GM12878 (cell line): ENCODE measurements at regions of chr1 and their contacts with region 1.

Region 1: GRCh38 chr1:206808615-206809014 is 36.3 kb upstream of the IL10 start:
- DNase-seq: no peak
- ATAC-seq: peak; percentile 99
- H3K4me3 ChIP-seq: no peak overlapping the region
- H3K27ac ChIP-seq: no peak overlapping the region
- H3K4me1 ChIP-seq: peaks cover 11% of the 10 kb centered on the region
- H3K27me3 ChIP-seq: no peaks in the 10 kb centered on the region
- CTCF ChIP-seq: peak; percentile 69 to 92 (median 70)
- EP300 ChIP-seq: no peak
- POLR2A ChIP-seq: no peak
- RAD21 ChIP-seq: peak; percentile 99

Region 2: DNA sequence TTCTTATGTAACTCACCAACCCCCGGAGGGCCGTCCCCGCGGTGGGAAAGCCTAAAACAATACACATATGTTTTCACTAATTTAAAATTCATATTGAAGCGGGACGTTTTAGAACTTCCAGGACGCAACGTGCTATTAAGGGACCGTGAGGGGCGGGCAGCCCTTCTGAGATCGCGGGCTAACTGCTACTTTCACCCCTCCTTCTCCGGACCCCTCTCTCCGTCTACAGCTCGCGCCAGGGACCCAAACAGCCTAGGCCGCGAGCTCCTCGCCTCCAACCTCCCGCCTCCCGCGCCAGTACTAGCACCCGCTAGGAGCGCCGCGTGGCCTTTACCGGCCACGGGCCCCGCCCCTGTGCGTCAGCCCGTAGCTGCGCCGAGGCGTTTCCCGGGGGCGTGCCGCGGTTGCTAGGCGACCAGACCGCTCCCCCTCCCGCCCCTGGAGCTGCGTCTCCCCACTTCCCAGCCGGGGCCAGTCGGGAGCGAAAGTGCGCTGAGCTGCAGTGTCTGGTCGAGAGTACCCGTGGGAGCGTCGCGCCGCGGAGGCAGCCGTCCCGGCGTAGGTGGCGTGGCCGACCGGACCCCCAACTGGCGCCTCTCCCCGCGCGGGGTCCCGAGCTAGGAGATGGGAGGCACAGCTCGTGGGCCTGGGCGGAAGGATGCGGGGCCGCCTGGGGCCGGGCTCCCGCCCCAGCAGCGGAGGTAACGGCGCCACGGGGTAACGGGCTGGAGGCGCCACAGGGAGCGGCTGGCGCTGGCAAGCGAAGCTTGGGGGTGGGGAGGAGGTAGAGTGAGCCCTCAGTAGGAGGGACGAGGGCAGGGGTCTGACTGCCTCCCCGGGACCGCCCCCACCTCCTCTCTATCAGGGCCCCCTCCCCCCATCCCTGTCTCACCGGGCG is 173.3 kb before region 1 on chr1 and contains the start of gene DYRK3:
- CTCF ChIA-PET with region 1: interaction called, 20 read pairs
- POLR2A ChIA-PET with region 1: interaction called, 6 read pairs
- RAD21 ChIA-PET with region 1: interaction called, 13 read pairs
- SMC1A ChIA-PET with region 1: interaction called, 26 read pairs
- in situ Hi-C with region 1: no loop called
- intact Hi-C with region 1: loop called (anchors 2 kb)
- DNase-seq: peak; percentile 71
- ATAC-seq: peak; percentile 92
- H3K4me3 ChIP-seq: peak within 1 kb of the TSS; percentile 94
- H3K27ac ChIP-seq: peak within 1 kb of the TSS; percentile 62
- H3K4me1 ChIP-seq: peaks cover 26% of the 10 kb centered on the region
- H3K27me3 ChIP-seq: no peaks in the 10 kb centered on the region
- CTCF ChIP-seq: 0 out of 6 replicates have a peak, but pooled peaks of 1 of the 3 experiments have one; percentile 5
- EP300 ChIP-seq: 0 out of 4 replicates have a peak, but pooled peaks of 1 of the 2 experiments have one; percentile 17
- POLR2A ChIP-seq: peak; percentile 94
- RAD21 ChIP-seq: no peak
- polyA plus RNA-seq, gene DYRK3: 1.6 to 2.8 TPM

Region 3: DNA sequence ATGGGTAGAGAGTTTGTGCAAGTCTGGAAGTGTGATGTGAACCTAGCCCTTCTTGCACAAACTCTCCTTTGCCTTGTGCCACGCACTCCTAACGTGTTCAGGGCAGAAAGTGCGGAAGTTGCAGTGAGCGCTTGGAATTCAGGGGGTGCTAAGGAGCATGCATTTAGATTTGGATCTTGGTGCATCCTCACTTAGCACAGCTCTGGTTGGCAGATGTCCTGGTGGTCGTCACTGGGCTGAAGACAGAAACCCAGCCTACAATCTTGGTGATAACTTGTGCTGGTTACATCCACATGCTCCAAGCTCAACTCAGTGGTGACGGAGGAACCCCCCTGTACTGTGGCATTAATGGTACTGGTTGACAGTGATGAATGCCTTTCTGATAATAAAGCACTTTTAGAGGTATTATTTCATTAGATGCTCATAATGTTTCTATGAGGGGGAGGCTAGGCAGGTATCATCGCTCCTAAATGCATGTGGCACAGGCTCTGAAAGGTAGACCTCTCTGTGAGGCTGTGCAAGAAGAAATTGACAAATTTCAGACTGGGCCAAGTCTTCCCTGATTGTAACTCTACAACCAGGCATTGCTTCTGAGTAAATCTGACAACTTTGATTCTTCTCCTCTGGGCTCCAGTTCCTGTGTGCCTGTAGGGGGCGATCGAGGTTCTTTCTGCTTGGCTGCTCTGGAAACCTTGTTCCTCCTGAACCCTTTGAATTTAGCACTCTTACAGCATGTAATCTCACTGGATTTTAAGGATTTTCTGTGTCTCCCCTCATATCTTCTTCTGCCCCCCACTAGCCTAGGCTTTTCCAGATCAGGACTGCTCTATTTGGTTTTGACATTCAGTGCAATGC is 83.3 kb before region 1 on chr1:
- CTCF ChIA-PET with region 1: interaction called, 805 read pairs
- POLR2A ChIA-PET with region 1: interaction called, 3 read pairs
- RAD21 ChIA-PET with region 1: interaction called, 297 read pairs
- SMC1A ChIA-PET with region 1: interaction called, 66 read pairs
- in situ Hi-C with region 1: no loop called
- intact Hi-C with region 1: loop called (anchors 1 kb)
- DNase-seq: no peak
- ATAC-seq: peak; percentile 84
- H3K4me3 ChIP-seq: no peak overlapping the region
- H3K27ac ChIP-seq: 0 out of 2 replicates have a peak overlapping the region, but pooled peaks have one; percentile 34
- H3K4me1 ChIP-seq: peaks cover 29% of the 10 kb centered on the region
- H3K27me3 ChIP-seq: no peaks in the 10 kb centered on the region
- CTCF ChIP-seq: peak; percentile 59 to 78 (median 73)
- EP300 ChIP-seq: no peak
- POLR2A ChIP-seq: no peak
- RAD21 ChIP-seq: peak; percentile 53

Region 4: DNA sequence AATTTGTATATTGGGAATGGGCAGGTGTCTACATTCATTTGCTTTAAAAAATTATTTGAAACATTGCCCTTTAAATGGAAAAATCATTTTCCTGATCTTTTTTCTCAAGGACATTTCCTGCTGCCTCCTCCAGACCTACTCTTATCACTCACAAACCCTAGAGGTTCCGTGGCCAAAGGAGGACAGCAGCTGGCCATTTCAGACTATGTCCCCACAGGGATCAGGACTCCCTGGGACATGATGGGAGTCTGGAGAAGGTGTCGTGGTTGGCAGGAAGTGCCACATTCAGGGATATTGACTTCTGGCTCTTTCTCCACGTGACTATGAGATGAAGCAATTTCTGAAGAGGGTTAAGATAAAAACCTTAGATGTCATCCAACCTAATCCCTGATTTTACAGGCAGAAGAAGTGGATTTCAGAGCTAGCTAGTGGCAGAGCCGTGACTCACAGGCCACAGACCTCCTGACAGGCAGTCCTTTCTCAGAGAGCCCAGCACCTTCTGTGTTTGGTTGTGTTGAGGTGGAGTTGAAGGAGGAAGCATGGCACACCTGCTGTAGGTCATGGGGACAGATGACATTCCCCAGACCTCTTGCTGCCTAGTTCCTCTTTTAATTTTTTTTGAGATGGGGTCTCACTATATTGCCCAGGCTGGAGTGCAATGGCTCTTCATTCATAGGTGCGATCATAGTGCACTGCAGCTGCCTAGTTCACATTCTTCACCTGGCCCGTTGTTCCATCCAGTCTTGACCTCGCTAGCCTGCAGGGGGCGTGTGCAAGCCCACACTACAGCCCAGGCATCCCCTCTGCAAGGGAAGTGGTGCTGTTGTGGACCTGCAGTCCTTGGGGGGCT is 10.9 kb before region 1 on chr1:
- CTCF ChIA-PET with region 1: interaction called, 30 read pairs
- POLR2A ChIA-PET with region 1: interaction called, 5 read pairs
- RAD21 ChIA-PET with region 1: interaction called, 12 read pairs
- SMC1A ChIA-PET with region 1: interaction called, 26 read pairs
- in situ Hi-C with region 1: no loop called
- intact Hi-C with region 1: no loop called
- DNase-seq: no peak
- ATAC-seq: peak; percentile 31; the same call in 2 of the 3 replicates
- H3K4me3 ChIP-seq: no peak overlapping the region
- H3K27ac ChIP-seq: no peak overlapping the region
- H3K4me1 ChIP-seq: peaks cover 28% of the 10 kb centered on the region
- H3K27me3 ChIP-seq: no peaks in the 10 kb centered on the region
- CTCF ChIP-seq: peak; percentile 44 to 78 (median 73)
- EP300 ChIP-seq: no peak
- POLR2A ChIP-seq: no peak
- RAD21 ChIP-seq: peak; percentile 41

Region 5: DNA sequence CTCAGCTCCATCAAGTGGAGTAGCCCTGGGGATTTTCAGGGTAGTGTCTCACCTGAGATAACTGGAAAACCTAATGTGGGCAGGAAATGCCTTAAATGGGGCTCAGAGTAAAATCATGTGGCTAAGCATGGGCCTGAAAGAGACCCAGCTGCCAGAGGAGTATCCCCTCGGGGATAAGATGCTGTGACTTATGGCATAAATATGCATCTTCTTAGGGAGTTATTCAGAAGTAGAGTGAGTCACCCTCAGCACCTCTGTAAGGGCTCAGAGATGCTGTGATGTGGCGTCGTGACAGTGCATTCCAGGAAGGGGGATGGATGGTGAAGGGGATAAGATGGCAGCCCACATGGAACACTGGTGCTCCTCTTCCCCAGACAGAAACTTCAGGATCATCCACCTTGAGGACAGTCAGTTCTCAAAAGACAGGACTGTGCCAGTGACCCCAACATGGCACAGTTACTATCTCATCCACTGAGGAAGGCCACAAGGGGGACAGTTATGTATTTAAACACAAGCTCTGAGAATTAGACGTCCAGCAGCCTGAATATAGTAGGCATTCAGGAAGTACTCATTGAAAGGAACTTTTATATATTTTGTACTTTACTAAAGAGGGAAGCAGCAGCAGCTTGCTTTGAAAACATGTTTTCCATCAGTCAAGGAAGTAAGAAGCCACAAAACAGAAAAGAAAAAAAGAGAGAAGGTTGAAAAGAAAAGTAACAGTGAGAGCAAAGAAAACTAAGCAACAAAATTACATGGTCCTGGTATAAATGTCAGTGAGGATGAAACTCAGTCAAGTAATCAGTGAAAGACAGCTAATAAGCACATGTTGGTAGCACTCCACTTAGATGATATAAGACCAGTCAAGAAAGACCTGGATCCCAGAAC is 96.9 kb after region 1 on chr1:
- CTCF ChIA-PET with region 1: interaction called, 35 read pairs
- POLR2A ChIA-PET with region 1: interaction called, 6 read pairs
- RAD21 ChIA-PET with region 1: interaction called, 4 read pairs
- SMC1A ChIA-PET with region 1: interaction called, 10 read pairs
- in situ Hi-C with region 1: loop called (anchors 5 kb)
- intact Hi-C with region 1: no loop called
- DNase-seq: no peak
- ATAC-seq: peak; percentile 80
- H3K4me3 ChIP-seq: no peak overlapping the region
- H3K27ac ChIP-seq: no peak overlapping the region
- H3K4me1 ChIP-seq: peaks cover 3% of the 10 kb centered on the region; the same call in 1 of the 2 replicates
- H3K27me3 ChIP-seq: no peaks in the 10 kb centered on the region
- CTCF ChIP-seq: no peak
- EP300 ChIP-seq: no peak
- POLR2A ChIP-seq: no peak
- RAD21 ChIP-seq: no peak

Region 6: DNA sequence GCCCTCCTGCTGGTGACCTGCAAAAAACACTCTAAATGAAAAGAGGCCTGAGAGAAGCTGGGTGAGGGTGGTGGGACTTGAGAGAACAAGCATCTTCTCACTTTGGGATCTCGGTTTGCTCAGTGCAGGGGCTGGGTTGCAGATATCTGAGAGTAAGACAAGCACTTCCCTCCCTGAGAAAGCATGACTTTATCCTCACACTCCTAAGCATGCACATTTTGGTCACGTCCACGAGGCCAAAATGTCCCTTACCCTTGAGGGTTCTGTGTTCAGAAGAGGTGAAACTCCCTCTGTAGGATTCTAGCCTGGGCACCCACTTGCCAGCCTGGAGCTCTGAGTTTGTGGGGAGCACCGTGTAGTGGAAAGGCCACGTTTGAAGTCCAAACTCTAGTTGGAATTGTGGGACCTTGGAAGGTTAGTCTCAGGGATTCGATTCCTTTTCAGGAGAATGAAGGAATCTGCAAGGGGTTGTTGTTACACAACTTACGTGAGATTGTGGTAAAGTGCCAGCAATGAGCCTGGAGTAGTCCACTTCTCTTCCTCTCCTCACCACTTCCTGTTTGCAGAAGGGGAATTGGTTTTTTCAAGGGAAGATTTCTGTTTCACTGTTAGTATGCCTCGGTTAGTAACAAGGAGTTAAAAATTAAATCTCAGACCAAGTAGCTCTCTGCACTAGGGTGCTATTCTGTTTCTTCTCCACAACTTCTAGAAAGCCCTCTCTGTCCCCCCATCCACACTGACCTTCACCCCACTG is 158.7 kb after region 1 on chr1:
- CTCF ChIA-PET with region 1: interaction called, 5 read pairs
- POLR2A ChIA-PET with region 1: interaction called, 3 read pairs
- RAD21 ChIA-PET with region 1: no interaction called
- SMC1A ChIA-PET with region 1: interaction called, 10 read pairs
- in situ Hi-C with region 1: no loop called
- intact Hi-C with region 1: no loop called
- DNase-seq: peak; percentile 72
- ATAC-seq: peak; percentile 72
- H3K4me3 ChIP-seq: 0 out of 2 replicates have a peak overlapping the region, but pooled peaks have one; percentile 37
- H3K27ac ChIP-seq: peak overlapping the region; percentile 52
- H3K4me1 ChIP-seq: peaks cover 38% of the 10 kb centered on the region
- H3K27me3 ChIP-seq: no peaks in the 10 kb centered on the region
- CTCF ChIP-seq: no peak
- EP300 ChIP-seq: 0 out of 4 replicates have a peak, but pooled peaks of 1 of the 2 experiments have one; percentile 32
- POLR2A ChIP-seq: no peak
- RAD21 ChIP-seq: no peak